H1 (cell line): ENCODE measurements at regions of chr19 and their contacts with region 1.

Region 1: DNA sequence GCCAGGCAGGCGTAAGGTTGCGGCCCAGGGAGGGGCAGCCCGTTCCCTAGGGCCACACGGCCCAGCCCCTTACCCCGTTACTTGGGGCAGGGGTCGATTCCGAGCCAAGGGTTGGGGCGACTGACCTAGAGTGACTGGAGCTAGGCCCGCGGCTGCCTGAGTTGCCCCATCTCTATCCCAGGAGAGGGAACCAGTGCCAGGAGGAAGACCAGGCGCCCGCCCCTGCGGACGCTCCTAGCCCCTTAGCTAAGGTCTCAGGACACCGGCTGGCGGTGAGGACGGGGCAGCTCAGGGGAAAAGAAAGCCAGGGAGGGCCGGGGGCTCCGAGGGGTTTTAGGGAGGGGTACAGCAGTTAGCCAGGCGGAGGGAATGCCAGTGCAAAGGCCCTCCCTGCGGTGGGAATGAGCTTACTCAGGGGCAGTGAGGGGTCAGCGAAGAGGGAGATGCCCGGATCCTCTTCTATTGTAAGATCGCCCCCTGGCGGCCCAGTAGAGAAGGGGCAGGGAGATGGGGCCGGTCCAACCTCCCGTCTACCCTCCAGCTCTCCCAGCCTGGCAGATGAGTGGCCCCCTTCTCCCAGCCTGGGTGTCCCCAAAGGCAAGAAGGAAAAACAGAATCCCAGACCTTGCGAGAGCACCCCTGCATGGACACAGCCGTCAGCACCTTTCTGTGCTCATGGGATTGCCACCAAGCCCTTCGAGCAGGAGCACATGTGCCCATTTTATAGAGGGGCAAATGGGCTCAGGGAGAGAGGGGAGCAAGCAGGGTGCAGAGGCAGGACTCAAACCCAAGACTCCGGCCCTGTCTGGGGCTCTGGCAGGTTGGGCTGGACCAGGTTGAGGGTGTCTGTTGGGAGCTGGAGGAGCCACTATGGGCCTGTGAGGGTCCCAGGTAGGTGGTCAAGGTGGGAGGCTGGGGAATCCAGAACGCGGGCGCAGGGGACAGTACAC is 16.3 kb downstream of the CILP2 start:
- DNase-seq: peak in 1 of 2 experiments; percentile 94
- H3K4me3 ChIP-seq: no peak overlapping the region
- H3K27ac ChIP-seq: no peak overlapping the region
- H3K4me1 ChIP-seq: no peaks in the 10 kb centered on the region; a peak in 3 of 7 replicates
- H3K27me3 ChIP-seq: no peaks in the 10 kb centered on the region
- CTCF ChIP-seq: peak; percentile 83 to 92 (median 84)
- EP300 ChIP-seq: no peak
- POLR2A ChIP-seq: no peak
- RAD21 ChIP-seq: peak; percentile 65 to 70

Region 2: GRCh38 chr19:19420570-19421298 is 133.6 kb before region 1 on chr19:
- CTCF ChIA-PET with region 1: no interaction called
- POLR2A ChIA-PET with region 1: no interaction called
- DNase-seq: no peak
- H3K4me3 ChIP-seq: no peak overlapping the region
- H3K27ac ChIP-seq: no peak overlapping the region
- H3K4me1 ChIP-seq: peaks cover 0 to 3% (median 1%) of the 10 kb centered on the region in 4 experiments; a peak in 4 of 7 replicates
- H3K27me3 ChIP-seq: no peaks in the 10 kb centered on the region
- CTCF ChIP-seq: no peak
- EP300 ChIP-seq: no peak
- POLR2A ChIP-seq: no peak
- RAD21 ChIP-seq: no peak

Region 3: DNA sequence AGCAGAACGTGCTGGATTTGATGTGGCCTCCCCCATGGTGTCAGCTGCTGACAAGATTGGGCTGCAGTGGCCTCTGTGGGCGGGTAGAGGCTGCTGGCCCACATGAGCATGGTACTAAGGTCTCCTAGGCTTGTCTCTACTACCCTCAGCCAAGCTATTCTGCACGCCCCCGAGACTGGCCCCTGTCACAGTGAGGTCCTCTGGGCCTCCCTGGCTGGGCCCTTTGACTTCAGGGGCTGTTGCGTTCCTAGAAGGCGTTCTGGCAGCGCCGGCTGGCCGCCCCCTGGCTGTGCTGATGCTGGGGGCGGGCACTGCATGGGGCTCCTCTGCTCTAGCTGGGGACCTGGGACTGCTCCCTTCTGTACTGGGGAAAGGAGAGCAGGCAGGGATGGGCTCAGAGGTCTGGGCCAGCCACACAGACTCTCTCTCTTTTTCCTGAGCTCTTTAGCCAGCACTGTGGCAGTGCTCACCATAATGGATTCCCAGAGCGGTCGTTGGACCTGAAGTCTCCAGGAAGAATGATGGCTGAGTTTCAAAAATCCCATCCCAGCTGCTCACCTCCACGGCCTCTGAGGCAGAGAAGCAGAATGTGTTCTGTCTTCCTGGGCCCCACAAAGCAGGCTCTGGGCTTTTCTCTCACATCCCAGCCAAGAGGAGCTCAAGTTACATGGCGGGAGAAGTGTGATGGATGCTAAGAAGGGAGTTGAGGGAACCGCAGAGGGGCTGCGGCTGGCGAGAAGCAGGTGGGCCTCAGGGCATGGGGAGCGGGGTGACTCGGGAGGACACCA is 71.3 kb before region 1 on chr19:
- CTCF ChIA-PET with region 1: no interaction called
- POLR2A ChIA-PET with region 1: no interaction called
- DNase-seq: no peak
- H3K4me3 ChIP-seq: no peak overlapping the region
- H3K27ac ChIP-seq: no peak overlapping the region
- H3K4me1 ChIP-seq: peaks cover 0 to 20% (median 9%) of the 10 kb centered on the region in 4 experiments; a peak in 5 of 7 replicates
- H3K27me3 ChIP-seq: no peaks in the 10 kb centered on the region
- CTCF ChIP-seq: no peak
- EP300 ChIP-seq: no peak
- POLR2A ChIP-seq: no peak
- RAD21 ChIP-seq: no peak

Region 4: DNA sequence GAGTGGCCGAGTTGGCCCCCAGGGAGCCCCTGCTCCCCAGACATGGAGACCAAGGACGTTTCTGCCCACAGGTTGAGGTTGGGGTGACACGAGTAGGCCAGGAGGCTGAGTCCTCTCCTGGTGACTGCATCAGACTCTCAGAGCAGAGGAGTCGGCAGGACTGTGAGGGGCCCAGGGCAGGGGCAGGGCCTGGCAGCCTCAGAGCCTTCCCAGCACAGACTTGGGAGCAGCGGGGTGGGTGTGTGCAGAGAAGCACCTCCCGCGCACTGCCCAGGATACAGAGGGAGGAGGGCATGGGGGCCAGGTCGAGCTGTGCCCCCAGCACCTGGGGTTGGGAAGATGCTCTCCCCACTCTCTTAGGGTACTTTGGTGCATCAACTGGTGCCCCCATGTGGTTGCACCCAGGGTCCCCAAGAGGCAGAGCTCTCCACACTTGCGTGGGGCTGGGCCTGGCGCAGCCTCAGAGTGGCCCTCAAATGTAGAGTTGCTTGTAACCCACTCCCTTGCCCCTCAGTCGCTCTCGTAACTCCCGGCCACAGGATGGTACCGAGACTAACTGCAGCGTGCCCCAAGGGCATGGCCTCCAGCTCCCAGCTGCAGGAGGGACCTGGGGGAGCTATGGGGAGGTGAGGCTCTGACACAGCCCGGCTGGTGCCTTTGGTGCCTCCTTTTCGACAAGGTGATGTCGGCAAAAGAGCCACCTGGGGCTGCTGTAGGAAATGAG is 54.9 kb before region 1 on chr19:
- CTCF ChIA-PET with region 1: no interaction called
- POLR2A ChIA-PET with region 1: no interaction called
- DNase-seq: no peak
- H3K4me3 ChIP-seq: no peak overlapping the region
- H3K27ac ChIP-seq: no peak overlapping the region
- H3K4me1 ChIP-seq: no peaks in the 10 kb centered on the region
- H3K27me3 ChIP-seq: no peaks in the 10 kb centered on the region
- CTCF ChIP-seq: no peak
- EP300 ChIP-seq: no peak
- POLR2A ChIP-seq: no peak
- RAD21 ChIP-seq: no peak

Region 5: GRCh38 chr19:19531951-19532805 is 22.2 kb before region 1 on chr19:
- CTCF ChIA-PET with region 1: interaction called, 181 read pairs
- POLR2A ChIA-PET with region 1: interaction called, 13 read pairs
- DNase-seq: peak in 1 of 2 experiments; percentile 97
- H3K4me3 ChIP-seq: no peak overlapping the region
- H3K27ac ChIP-seq: no peak overlapping the region
- H3K4me1 ChIP-seq: peaks cover 0 to 3% (median 3%) of the 10 kb centered on the region in 4 experiments; a peak in 3 of 7 replicates
- H3K27me3 ChIP-seq: no peaks in the 10 kb centered on the region; a peak in 1 of 7 replicates
- CTCF ChIP-seq: peak; percentile 94 to 96 (median 96)
- EP300 ChIP-seq: no peak
- POLR2A ChIP-seq: 0 out of 3 replicates have a peak, but pooled peaks of 1 of the 2 experiments have one; percentile 21
- RAD21 ChIP-seq: peak; percentile 89 to 95

Region 6: DNA sequence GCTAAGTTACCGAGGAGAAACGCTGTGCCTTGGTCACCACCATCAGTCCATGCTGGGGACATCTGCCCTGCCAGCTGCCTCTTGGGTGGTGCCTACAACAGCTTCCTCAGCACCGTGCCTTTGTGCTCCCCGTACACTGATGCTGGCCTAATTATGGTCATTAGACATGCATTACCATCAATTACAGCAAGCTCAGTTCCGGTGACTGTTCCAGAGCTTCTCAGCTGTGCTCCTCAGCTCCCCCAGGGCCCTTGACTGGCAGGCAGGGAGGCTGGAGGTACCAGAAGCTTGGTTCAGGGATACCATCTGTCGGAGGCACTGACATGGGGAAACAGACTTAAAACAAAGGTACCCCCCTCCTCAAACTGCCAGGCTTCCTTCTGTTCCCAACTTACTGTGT is 23.9 kb after region 1 on chr19:
- CTCF ChIA-PET with region 1: interaction called, 223 read pairs
- POLR2A ChIA-PET with region 1: interaction called, 3 read pairs
- DNase-seq: no peak
- H3K4me3 ChIP-seq: no peak overlapping the region
- H3K27ac ChIP-seq: no peak overlapping the region
- H3K4me1 ChIP-seq: peaks cover 0 to 5% (median 2%) of the 10 kb centered on the region in 4 experiments; a peak in 5 of 7 replicates
- H3K27me3 ChIP-seq: no peaks in the 10 kb centered on the region; a peak in 1 of 7 replicates
- CTCF ChIP-seq: no peak
- EP300 ChIP-seq: no peak
- POLR2A ChIP-seq: no peak
- RAD21 ChIP-seq: no peak

Region 7: GRCh38 chr19:19606021-19606420 is 51.7 kb after region 1 on chr19:
- CTCF ChIA-PET with region 1: interaction called, 14 read pairs
- POLR2A ChIA-PET with region 1: no interaction called
- DNase-seq: no peak
- H3K4me3 ChIP-seq: no peak overlapping the region
- H3K27ac ChIP-seq: no peak overlapping the region
- H3K4me1 ChIP-seq: peaks cover 2 to 11% (median 4%) of the 10 kb centered on the region in 4 experiments; a peak in 6 of 7 replicates
- H3K27me3 ChIP-seq: no peaks in the 10 kb centered on the region
- CTCF ChIP-seq: no peak
- EP300 ChIP-seq: no peak
- POLR2A ChIP-seq: no peak
- RAD21 ChIP-seq: no peak

Region 8: GRCh38 chr19:19643158-19644053 is 89.1 kb after region 1 on chr19 and contains the start of gene GMIP:
- CTCF ChIA-PET with region 1: interaction called, 44 read pairs
- POLR2A ChIA-PET with region 1: interaction called, 3 read pairs
- DNase-seq: peak in 1 of 2 experiments; percentile 99
- H3K4me3 ChIP-seq: peak within 1 kb of the TSS; percentile 77 to 85 (median 80)
- H3K27ac ChIP-seq: peak within 1 kb of the TSS; percentile 78
- H3K4me1 ChIP-seq: peaks cover 0 to 3% (median 2%) of the 10 kb centered on the region in 4 experiments; a peak in 2 of 7 replicates
- H3K27me3 ChIP-seq: no peaks in the 10 kb centered on the region
- CTCF ChIP-seq: peak; percentile 74 to 94 (median 87)
- EP300 ChIP-seq: no peak
- POLR2A ChIP-seq: peak in 1 of 2 experiments; percentile 76; a peak in 1 of 3 replicates
- RAD21 ChIP-seq: peak; percentile 85 to 94
- total RNA-seq, gene GMIP: 18.1 and 20.2 TPM in 2 replicates

Region 9: GRCh38 chr19:19668230-19669012 is 114.1 kb after region 1 on chr19 and contains the start of gene ZNF101:
- CTCF ChIA-PET with region 1: no interaction called
- POLR2A ChIA-PET with region 1: no interaction called
- DNase-seq: peak; percentile 94 to 96
- H3K4me3 ChIP-seq: peak within 1 kb of the TSS; percentile 85 to 96 (median 90)
- H3K27ac ChIP-seq: peak within 1 kb of the TSS; percentile 87
- H3K4me1 ChIP-seq: peaks cover 0 to 6% (median 2%) of the 10 kb centered on the region in 4 experiments; a peak in 5 of 7 replicates
- H3K27me3 ChIP-seq: no peaks in the 10 kb centered on the region
- CTCF ChIP-seq: no peak
- EP300 ChIP-seq: no peak
- POLR2A ChIP-seq: peak; percentile 72 to 90
- RAD21 ChIP-seq: no peak
- total RNA-seq, gene ZNF101: 46.2 and 50.9 TPM in 2 replicates